ENCODE measurements at regions of chr14 and their contacts with region 1.

Region 1: GRCh38 chr14:74309125-74310022 is 6.6 kb upstream of the ABCD4 start:
- DNase-seq: no peak
- ATAC-seq: no peak
- H3K4me3 Mint-ChIP-seq: no peak overlapping the region
- H3K27ac Mint-ChIP-seq: no peak overlapping the region
- H3K4me1 Mint-ChIP-seq: no peaks in the 10 kb centered on the region
- H3K27me3 Mint-ChIP-seq: no peaks in the 10 kb centered on the region
- CTCF ChIP-seq: no peak

Region 2: DNA sequence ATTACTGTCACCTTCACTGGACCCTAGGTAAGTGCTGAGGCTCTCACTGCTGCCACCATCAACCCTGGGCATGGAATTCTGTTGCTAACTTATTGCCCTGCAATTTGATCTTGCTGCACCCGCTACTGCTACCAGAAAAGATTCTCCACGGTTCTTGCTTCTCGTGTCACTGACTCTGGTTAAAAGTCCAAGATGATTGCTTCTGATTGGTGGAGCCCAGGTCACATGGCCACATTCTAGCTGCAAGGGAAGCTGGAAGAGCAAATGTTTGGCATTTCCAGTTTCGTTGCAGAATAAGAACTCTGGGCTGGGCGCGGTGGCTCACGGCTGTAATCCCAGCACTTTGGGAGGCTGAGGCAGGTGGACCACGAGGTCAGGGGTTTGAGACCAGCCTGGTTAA is 77.6 kb before region 1 on chr14:
- CTCF ChIA-PET with region 1: no interaction called
- POLR2A ChIA-PET with region 1: no interaction called
- intact Hi-C with region 1: no loop called
- DNase-seq: no peak
- ATAC-seq: no peak
- H3K4me3 Mint-ChIP-seq: no peak overlapping the region
- H3K27ac Mint-ChIP-seq: no peak overlapping the region
- H3K4me1 Mint-ChIP-seq: no peaks in the 10 kb centered on the region
- H3K27me3 Mint-ChIP-seq: peaks cover 26% of the 10 kb centered on the region
- CTCF ChIP-seq: no peak

Region 3: GRCh38 chr14:74324931-74325361 is 15.6 kb after region 1 on chr14:
- CTCF ChIA-PET with region 1: interaction called, 10 read pairs
- POLR2A ChIA-PET with region 1: no interaction called
- intact Hi-C with region 1: no loop called
- DNase-seq: no peak
- ATAC-seq: no peak
- H3K4me3 Mint-ChIP-seq: no peak overlapping the region
- H3K27ac Mint-ChIP-seq: no peak overlapping the region
- H3K4me1 Mint-ChIP-seq: no peaks in the 10 kb centered on the region
- H3K27me3 Mint-ChIP-seq: peaks cover 4% of the 10 kb centered on the region
- CTCF ChIP-seq: peak; percentile 83

Region 4: DNA sequence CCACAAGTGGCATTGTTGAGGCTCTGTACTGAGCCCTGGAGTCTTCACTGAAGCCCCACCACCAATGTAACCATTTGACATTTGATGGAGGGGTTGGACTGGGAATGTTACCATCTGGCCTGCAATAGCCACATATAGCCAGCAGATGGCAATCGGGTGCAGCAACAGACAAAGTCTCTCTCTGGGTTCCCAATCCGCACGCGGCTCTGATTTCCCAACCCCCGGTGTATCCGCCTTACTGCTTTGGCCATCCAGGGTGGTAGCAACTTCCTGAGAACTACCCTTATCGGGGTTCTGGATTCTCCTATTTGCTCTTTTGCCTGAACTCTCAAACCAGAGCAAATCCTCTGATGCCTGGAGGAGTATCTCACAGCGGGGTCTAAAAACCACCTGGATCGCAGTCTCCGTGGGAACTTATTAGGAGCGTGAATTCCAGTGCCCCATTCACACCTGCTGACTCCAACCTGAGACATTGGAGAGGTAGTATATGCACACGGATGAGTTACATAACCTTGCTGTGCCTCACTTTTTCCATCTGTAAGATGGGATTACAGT is 53.1 kb after region 1 on chr14:
- CTCF ChIA-PET with region 1: no interaction called
- POLR2A ChIA-PET with region 1: no interaction called
- intact Hi-C with region 1: no loop called
- DNase-seq: peak; percentile 80
- ATAC-seq: peak; percentile 80
- H3K4me3 Mint-ChIP-seq: no peak overlapping the region
- H3K27ac Mint-ChIP-seq: no peak overlapping the region
- H3K4me1 Mint-ChIP-seq: no peaks in the 10 kb centered on the region
- H3K27me3 Mint-ChIP-seq: peaks cover 12% of the 10 kb centered on the region
- CTCF ChIP-seq: peak; percentile 98

Measured in activated CD8-positive, alpha-beta T cell treated with anti-CD3 and anti-CD28 coated beads for 36 hours (primary cell).